Left ventricle myocardium superior (tissue), 1 donor: ENCODE measurements at regions of chr17 and their contacts with region 1.

Region 1: GRCh38 chr17:27353461-27354050 is 59.6 kb downstream of the WSB1 start:
- DNase-seq: peak; percentile 94
- ATAC-seq: peak; percentile 93

Region 2: GRCh38 chr17:27049104-27049784 is 304.3 kb before region 1 on chr17:
- intact Hi-C with region 1: no loop called
- DNase-seq: no peak
- ATAC-seq: no peak

Region 3: GRCh38 chr17:27236717-27237315 is 116.7 kb before region 1 on chr17:
- intact Hi-C with region 1: loop called (anchors 10 kb)
- DNase-seq: peak; percentile 59
- ATAC-seq: peak; percentile 77

Region 4: DNA sequence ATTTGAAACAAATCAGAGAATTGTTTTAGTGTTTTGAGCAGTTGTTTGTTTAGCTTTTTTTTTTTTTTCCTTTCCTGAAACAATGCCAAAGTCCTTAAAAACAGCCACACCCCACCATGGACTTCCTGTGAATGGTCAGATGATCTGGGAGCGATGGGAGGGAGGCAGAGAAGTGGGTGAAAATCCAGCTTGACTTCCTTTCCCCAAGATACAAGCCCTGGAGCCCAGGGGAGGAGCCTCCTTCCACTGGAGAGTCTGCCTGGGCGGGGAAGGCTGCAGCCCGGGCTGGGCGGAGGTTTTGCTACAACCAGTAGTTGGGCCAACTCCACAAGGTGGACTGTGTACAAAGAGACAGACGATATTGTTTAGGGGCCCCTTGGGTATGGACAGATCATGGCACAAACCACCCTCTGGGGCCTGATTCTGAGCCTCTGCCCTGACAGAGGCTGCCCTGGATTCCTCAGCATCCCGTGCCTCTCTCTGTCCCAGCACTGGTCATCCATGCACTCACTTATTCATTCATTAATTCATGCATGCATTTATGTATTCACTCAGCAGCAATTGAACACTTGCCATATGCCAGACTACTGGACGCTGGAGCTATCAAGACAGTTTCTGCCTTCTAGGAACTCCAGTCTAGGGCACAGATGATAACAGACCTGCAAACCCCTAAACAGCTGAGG is 29.9 kb before region 1 on chr17:
- intact Hi-C with region 1: no loop called
- DNase-seq: peak; percentile 83
- ATAC-seq: peak; percentile 73

Region 5: GRCh38 chr17:27407916-27408846 is 54.6 kb after region 1 on chr17:
- intact Hi-C with region 1: no loop called
- DNase-seq: no peak
- ATAC-seq: peak; percentile 50

Region 6: GRCh38 chr17:27430882-27431491 is 77.4 kb after region 1 on chr17:
- intact Hi-C with region 1: loop called (anchors 10 kb)
- DNase-seq: peak; percentile 48
- ATAC-seq: peak; percentile 71

Region 7: DNA sequence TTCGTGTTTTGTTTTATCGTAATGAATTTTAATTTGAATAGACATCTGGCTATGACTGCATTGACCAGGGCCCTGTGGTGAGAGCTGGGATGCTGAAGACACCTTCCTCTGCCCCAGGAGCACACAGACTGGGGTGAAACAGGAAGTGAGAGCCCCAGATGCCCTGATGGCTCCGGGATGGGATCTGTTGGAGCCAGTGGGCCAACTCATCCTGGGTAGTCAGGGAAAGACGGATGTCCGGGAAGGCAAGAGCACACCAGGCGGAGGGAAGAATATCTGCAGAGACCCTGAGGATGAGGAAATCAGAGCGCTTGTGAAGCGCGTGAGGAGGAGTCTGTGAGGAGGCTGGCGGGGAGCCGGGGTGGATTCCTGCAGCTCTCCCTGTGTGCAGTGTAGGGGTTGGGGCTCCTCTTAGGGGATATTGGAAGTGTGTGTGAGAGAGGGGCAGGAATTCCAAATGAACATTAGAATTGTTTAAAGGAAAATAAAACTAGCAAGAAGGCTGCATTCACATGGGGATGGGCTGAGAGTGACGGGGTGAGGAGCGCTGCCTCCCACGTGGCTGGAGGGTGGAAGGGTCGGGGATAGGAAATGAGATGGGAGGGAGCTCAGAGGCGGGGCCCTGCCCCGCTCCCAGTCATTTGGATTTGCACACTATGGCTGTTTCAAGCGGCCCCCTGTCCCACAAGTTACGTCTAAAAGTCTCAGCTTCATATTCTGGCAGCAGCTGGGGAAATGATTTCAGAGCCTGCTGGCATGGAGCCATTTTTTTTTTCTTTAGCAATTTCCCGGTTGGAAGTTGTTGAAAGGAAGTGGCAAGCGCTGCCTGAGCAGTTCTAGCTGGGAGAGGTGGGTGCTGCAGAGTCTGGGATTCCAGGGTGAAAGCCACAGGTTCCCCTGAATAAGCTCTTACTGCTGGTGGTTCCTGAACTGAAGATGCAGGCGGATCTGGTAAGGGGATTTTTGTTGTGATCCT is 206.2 kb after region 1 on chr17:
- intact Hi-C with region 1: no loop called
- DNase-seq: peak; percentile 80
- ATAC-seq: peak; percentile 94

Region 8: DNA sequence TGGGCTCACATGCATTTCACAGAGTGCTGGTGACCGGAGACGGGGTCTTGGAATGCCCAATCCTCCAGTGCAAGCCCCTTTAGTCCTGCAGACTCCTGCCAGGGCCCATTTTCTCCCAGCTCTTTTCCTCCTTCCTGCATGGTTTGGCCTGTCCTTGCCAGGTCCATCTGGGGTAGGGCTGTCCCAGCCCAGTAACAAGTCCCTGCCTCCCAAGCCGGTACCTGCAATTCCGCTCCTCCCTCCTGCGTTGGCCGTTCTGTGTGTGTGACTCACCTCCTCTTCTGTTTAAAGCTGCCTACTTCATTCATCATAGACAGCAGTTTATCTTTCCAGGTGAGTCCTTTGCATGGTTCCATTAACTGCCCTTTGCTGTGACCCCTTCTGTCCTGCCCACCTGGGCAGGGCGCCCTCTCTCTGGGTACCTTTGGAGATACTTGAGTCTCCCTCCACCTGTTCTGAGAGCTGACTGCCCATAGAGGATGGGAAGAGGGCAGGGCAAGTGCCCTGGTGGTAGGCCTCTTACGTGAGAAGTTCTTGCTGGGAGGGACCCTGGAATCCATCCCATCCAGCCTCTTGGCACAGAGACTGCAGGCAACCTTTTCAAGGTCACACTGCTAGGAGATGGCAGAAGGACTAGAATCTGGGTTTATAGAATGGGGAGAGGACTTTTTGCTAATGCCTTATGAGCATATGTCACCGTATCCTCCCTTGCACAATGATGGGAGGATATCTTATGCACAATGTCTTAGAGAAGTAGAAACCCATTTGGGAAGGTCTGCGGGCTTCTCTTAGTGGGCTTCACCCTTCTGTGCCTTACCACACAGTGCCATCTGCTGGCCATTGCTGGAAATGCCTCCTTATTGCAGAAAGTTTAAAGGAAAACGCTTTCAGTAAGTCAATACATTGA is 247.8 kb after region 1 on chr17:
- intact Hi-C with region 1: loop called (anchors 5 kb)
- DNase-seq: peak; percentile 83
- ATAC-seq: peak; percentile 58